Cardiac septum (tissue), 1 donor: ENCODE measurements at regions of chr2 and their contacts with region 1.

Region 1: DNA sequence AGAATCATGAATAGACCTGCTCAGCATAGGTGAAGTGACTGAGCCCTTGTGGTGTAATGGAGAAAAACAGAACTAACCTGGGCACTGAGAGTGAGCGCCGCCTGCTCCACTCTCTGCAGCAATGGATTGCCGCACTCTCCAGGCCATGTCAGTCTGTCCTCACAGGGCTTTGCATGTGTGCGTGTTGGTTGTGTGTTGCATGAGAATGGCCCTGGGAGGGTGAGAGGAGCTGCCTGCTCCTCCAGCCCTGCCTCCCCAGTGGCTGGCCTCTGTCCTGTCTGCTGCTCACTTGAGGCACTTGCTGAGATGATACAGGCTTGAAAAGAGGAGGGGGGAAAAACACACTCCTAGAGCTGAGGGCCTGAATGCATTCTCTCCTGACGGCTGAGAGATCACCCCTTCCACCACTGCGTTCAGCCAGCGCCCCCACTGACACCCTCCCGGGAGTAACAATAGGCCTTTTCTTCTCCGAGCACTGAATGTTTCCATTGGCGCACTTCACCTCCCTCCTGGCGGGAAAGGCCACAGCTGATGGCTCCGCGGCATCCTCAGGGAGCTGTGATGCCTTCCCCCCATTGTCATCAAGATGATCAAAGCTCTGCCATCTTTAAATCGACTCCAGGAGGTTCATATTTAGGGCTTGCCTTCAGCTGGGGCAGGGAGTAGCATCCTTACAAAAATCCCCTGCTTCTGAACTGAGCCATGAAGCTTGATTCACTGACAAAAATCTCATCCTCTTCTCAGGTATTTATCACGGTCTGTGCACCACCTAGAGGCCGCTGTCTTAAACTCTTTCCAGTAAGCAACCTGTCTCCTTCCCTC is 49.9 kb upstream of the DAPL1 start:
- DNase-seq: no peak

Region 2: GRCh38 chr2:158600155-158600802 is 145.0 kb before region 1 on chr2:
- intact Hi-C with region 1: loop called (anchors 10 kb)
- DNase-seq: peak; percentile 77

Region 3: GRCh38 chr2:158667586-158667985 is 77.7 kb before region 1 on chr2:
- intact Hi-C with region 1: loop called (anchors 5 kb)
- DNase-seq: no peak

Region 4: DNA sequence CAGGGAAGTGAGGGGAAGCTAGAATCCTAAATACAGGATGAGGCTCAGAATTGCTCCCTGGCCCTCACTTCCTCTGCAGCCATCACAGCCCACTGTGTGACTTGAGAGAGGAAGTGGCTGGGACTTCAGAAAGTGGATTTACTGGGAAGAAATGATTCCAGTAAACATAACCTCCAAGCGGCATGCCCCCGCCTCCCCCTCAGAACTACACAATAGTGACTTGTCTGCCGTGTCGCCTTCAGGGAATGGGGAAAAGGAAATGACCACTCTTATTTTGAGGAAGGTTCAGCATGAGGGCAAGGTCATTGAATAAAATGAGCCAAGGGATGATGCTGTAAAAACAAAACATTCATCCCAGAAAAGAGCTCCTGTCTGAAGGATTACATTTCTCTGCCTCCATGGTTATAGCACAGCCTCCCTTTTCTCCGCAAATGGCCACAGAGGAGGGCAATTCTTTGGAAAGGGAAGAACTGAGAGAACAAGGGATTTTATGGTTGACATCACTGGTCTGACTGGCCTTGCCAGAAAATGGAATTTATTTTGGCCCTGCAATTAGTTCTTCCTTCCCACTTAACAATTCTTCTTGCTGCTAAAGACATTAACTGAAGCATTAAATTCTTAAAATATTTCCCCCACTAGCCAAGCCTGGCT is 29.0 kb before region 1 on chr2:
- intact Hi-C with region 1: loop called (anchors 1 kb)
- DNase-seq: peak; percentile 87

Region 5: DNA sequence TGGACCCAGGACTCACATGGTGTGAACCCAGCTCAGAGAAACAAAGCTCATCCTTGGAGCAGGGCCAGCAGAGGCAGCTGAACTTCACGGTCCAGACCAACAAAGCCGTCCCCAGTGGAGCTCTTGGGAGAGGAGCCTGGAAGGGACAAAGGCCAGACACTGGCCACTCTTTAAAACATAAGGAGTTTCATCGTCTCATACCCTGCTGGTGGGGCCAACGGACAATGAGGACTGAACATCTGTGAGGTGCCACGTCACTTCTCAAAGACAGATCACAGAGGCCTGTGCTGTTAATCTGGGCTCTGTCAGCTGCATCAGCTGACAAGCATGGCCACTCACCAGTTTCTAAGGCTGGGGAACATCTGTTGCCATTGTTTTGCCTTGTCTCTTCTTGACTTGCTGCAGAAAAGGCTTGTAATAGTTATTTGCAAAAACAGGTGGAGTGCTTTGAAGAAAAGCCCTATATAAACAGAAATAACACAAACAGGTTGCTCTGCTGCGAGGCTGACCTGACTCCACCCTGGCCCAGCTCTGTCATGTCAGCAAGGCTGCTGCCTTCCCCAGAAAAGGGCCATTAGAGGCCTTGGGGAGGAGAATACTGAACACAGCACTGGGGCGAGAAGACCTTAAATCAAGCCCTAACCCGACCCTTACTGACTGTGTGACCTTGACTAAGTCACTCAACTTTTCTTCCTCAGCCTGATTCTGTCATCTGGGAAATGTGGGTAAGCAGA is 18.2 kb before region 1 on chr2:
- intact Hi-C with region 1: no loop called
- DNase-seq: no peak